ENCODE measurements at regions of chr16 and their contacts with region 1.

Region 1: GRCh38 chr16:57300387-57301125 is 16.1 kb upstream of the PLLP start:
- DNase-seq: peak; percentile 99 to 100 (median 100)
- ATAC-seq: peak; percentile 92
- H3K4me3 ChIP-seq: no peak overlapping the region
- H3K27ac ChIP-seq: peak overlapping the region; percentile 78 to 90 (median 86)
- H3K4me1 ChIP-seq: peaks cover 42% of the 10 kb centered on the region
- H3K27me3 ChIP-seq: no peaks in the 10 kb centered on the region
- CTCF ChIP-seq: peak; percentile 82 to 100 (median 99)
- POLR2A ChIP-seq: peak in 1 of 3 donors; percentile 17

Region 2: GRCh38 chr16:57377080-57377841 is 76.7 kb after region 1 on chr16:
- intact Hi-C with region 1: no loop called
- DNase-seq: no peak
- ATAC-seq: no peak
- H3K4me3 ChIP-seq: no peak overlapping the region
- H3K27ac ChIP-seq: peak overlapping the region in 1 of 4 donors; percentile 27
- H3K4me1 ChIP-seq: peaks cover 19% of the 10 kb centered on the region
- H3K27me3 ChIP-seq: no peaks in the 10 kb centered on the region
- CTCF ChIP-seq: no peak
- POLR2A ChIP-seq: no peak

Region 3: DNA sequence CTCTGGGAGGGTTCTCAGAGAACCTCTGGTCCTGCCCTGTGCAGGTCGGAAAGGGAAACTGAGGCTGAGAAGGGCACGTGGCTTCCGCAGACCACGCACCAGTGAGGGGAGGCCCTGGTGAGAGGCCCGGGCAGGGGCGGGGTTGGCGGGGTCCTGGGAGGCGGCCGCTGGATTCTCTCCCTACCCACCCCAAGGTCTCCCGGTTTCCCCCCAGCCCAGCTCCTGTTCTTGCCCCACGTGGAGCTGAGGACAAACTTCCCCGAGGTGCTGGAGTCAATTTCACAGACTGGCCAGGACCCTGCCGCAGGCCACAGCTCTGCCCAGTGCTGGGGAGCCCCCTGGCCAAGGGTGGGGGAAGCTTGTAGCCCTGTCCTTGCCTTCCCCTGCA is 115.6 kb after region 1 on chr16:
- intact Hi-C with region 1: loop called (anchors 2 kb)
- DNase-seq: no peak
- ATAC-seq: no peak
- H3K4me3 ChIP-seq: no peak overlapping the region
- H3K27ac ChIP-seq: no peak overlapping the region
- H3K4me1 ChIP-seq: peaks cover 18% of the 10 kb centered on the region
- H3K27me3 ChIP-seq: no peaks in the 10 kb centered on the region
- CTCF ChIP-seq: no peak
- POLR2A ChIP-seq: no peak

Region 4: DNA sequence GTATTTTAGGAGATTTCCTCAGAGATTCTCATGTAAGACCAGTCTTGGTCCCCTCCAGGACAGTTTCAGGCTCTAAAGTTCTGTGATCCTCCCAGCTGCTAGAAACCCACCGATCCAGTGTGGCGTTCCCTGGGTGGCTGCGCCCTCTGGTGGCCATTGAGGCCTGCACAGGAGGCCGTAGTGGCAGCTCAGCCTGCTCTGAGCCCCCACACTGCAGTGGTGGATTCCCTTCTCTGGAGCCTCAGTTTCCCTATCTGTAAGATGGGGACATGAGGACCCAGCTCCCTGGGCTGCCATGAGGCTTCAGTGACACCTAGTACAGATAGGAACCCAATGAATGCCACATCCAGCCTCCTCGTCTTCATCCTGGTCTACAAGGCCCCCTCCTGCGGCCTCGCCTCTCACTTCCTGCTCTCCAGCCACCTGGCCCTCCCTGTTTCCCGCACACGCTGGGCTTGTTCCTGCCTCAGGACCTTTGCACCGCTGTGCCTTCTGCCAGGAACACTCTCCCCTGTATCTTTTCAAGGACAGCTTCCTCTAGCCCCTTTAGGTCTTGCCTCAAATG is 219.3 kb after region 1 on chr16:
- intact Hi-C with region 1: loop called (anchors 5 kb)
- DNase-seq: peak; percentile 77 to 84 (median 80)
- ATAC-seq: peak; percentile 80
- H3K4me3 ChIP-seq: no peak overlapping the region
- H3K27ac ChIP-seq: no peak overlapping the region
- H3K4me1 ChIP-seq: no peaks in the 10 kb centered on the region
- H3K27me3 ChIP-seq: no peaks in the 10 kb centered on the region
- CTCF ChIP-seq: peak; percentile 87 to 93 (median 91)
- POLR2A ChIP-seq: no peak